Activated naive CD4-positive, alpha-beta T cell treated with anti-CD3 and anti-CD28 coated beads for 36 hours (primary cell): ENCODE measurements at regions of chr1 and their contacts with region 1.

Region 1: GRCh38 chr1:197521118-197521739 is 253.2 kb downstream of the CRB1 start:
- DNase-seq: peak; percentile 37
- H3K4me3 Mint-ChIP-seq: no peak overlapping the region
- H3K27ac Mint-ChIP-seq: no peak overlapping the region
- H3K4me1 Mint-ChIP-seq: no peaks in the 10 kb centered on the region
- H3K27me3 Mint-ChIP-seq: no peaks in the 10 kb centered on the region

Region 2: GRCh38 chr1:197180252-197180878 is 340.9 kb before region 1 on chr1:
- CTCF ChIA-PET with region 1: interaction called, 4 read pairs
- intact Hi-C with region 1: loop called (anchors 1 kb)
- DNase-seq: no peak
- H3K4me3 Mint-ChIP-seq: no peak overlapping the region
- H3K27ac Mint-ChIP-seq: no peak overlapping the region
- H3K4me1 Mint-ChIP-seq: no peaks in the 10 kb centered on the region
- H3K27me3 Mint-ChIP-seq: no peaks in the 10 kb centered on the region

Region 3: GRCh38 chr1:197327776-197328364 is 193.4 kb before region 1 on chr1:
- CTCF ChIA-PET with region 1: no interaction called
- intact Hi-C with region 1: loop called (anchors 1 kb)
- DNase-seq: no peak
- H3K4me3 Mint-ChIP-seq: no peak overlapping the region
- H3K27ac Mint-ChIP-seq: no peak overlapping the region
- H3K4me1 Mint-ChIP-seq: no peaks in the 10 kb centered on the region
- H3K27me3 Mint-ChIP-seq: no peaks in the 10 kb centered on the region

Region 4: GRCh38 chr1:197399755-197400527 is 121.3 kb before region 1 on chr1:
- CTCF ChIA-PET with region 1: interaction called, 6 read pairs
- intact Hi-C with region 1: loop called (anchors 1 kb)
- DNase-seq: peak; percentile 28
- H3K4me3 Mint-ChIP-seq: peak overlapping the region; percentile 32
- H3K27ac Mint-ChIP-seq: no peak overlapping the region
- H3K4me1 Mint-ChIP-seq: no peaks in the 10 kb centered on the region
- H3K27me3 Mint-ChIP-seq: no peaks in the 10 kb centered on the region

Region 5: DNA sequence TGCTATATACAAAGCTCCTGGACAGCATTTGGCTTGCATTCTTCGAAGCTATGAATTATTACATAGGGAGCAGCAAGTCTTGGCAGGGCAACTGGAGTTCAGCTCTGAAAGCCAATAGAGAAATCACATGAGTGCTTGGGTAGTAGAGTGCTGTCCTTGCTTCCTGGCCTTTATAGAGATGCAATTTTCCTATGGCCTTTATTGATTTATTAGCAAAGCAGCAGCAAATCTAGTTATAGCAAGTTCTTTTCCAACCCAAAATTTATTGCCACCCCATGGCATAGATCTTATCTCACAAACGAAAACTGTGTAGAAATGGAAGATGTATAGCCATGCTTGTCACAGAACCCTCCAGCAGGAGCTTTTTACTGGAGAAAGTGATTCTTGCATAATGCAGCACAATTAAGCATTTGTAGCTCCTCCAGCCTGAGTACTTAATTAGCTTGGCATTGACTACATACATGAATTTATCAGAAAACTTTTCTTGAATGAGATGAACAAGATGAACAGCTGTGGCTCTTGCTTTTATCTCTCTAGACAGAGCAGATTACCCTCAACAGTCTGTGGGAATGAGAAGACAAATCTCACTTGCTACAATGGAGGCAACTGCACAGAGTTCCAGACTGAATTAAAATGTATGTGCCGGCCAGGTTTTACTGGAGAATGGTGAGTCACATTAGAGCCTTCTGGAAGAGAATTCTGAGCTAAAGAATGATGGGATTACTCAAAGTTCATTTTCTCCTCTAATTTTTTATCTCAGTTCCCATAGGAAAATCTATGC is 83.0 kb before region 1 on chr1:
- CTCF ChIA-PET with region 1: no interaction called
- intact Hi-C with region 1: no loop called
- DNase-seq: no peak
- H3K4me3 Mint-ChIP-seq: no peak overlapping the region
- H3K27ac Mint-ChIP-seq: no peak overlapping the region
- H3K4me1 Mint-ChIP-seq: no peaks in the 10 kb centered on the region
- H3K27me3 Mint-ChIP-seq: no peaks in the 10 kb centered on the region

Region 6: GRCh38 chr1:197587815-197588517 is 66.7 kb after region 1 on chr1:
- CTCF ChIA-PET with region 1: no interaction called
- intact Hi-C with region 1: no loop called
- DNase-seq: no peak
- H3K4me3 Mint-ChIP-seq: no peak overlapping the region
- H3K27ac Mint-ChIP-seq: no peak overlapping the region
- H3K4me1 Mint-ChIP-seq: no peaks in the 10 kb centered on the region
- H3K27me3 Mint-ChIP-seq: no peaks in the 10 kb centered on the region

Region 7: DNA sequence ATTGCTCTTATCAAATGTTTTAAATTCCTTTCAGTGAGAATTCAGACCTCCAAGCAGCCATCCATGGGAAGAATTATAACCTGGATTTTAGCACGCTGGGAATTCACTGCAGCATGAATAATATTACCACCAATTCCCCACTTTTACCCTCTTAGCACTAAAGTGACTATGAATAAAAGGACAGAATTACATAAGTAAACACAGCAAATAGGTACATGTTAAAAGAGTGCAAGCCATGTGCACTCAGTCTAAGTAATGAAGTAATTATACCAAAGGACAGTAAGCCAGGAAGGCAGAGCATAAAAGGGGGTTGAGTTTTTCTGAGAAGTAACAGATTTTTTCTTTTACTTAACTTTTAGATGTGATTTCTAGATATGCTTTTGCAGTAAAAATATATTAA is 77.7 kb after region 1 on chr1:
- CTCF ChIA-PET with region 1: no interaction called
- intact Hi-C with region 1: no loop called
- DNase-seq: no peak
- H3K4me3 Mint-ChIP-seq: no peak overlapping the region
- H3K27ac Mint-ChIP-seq: no peak overlapping the region
- H3K4me1 Mint-ChIP-seq: no peaks in the 10 kb centered on the region
- H3K27me3 Mint-ChIP-seq: no peaks in the 10 kb centered on the region

Region 8: GRCh38 chr1:198298640-198299039 is 777.4 kb after region 1 on chr1:
- CTCF ChIA-PET with region 1: no interaction called
- intact Hi-C with region 1: loop called (anchors 10 kb)
- DNase-seq: no peak
- H3K4me3 Mint-ChIP-seq: no peak overlapping the region
- H3K27ac Mint-ChIP-seq: no peak overlapping the region
- H3K4me1 Mint-ChIP-seq: no peaks in the 10 kb centered on the region
- H3K27me3 Mint-ChIP-seq: no peaks in the 10 kb centered on the region